Activated CD4-positive, alpha-beta T cell treated with anti-CD3 and anti-CD28 coated beads for 36 hours (primary cell): ENCODE measurements at regions of chr6 and their contacts with region 1.

Region 1: GRCh38 chr6:148760568-148761526 is 14.0 kb downstream of the UST start:
- DNase-seq: peak; percentile 71
- ATAC-seq: peak; percentile 67
- H3K4me3 Mint-ChIP-seq: peak overlapping the region; percentile 67
- H3K27ac Mint-ChIP-seq: peak overlapping the region; percentile 86
- H3K4me1 Mint-ChIP-seq: peaks cover 66% of the 10 kb centered on the region
- H3K27me3 Mint-ChIP-seq: peaks cover 15% of the 10 kb centered on the region

Region 2: GRCh38 chr6:148203970-148204369 is 556.9 kb before region 1 on chr6:
- CTCF ChIA-PET with region 1: no interaction called
- POLR2A ChIA-PET with region 1: no interaction called
- intact Hi-C with region 1: loop called in 1 of 2 experiments (anchors 5 kb)
- DNase-seq: peak; percentile 85
- ATAC-seq: peak; percentile 88
- H3K4me3 Mint-ChIP-seq: peak overlapping the region; percentile 66
- H3K27ac Mint-ChIP-seq: peak overlapping the region; percentile 59
- H3K4me1 Mint-ChIP-seq: peaks cover 38% of the 10 kb centered on the region
- H3K27me3 Mint-ChIP-seq: peaks cover 75% of the 10 kb centered on the region

Region 3: DNA sequence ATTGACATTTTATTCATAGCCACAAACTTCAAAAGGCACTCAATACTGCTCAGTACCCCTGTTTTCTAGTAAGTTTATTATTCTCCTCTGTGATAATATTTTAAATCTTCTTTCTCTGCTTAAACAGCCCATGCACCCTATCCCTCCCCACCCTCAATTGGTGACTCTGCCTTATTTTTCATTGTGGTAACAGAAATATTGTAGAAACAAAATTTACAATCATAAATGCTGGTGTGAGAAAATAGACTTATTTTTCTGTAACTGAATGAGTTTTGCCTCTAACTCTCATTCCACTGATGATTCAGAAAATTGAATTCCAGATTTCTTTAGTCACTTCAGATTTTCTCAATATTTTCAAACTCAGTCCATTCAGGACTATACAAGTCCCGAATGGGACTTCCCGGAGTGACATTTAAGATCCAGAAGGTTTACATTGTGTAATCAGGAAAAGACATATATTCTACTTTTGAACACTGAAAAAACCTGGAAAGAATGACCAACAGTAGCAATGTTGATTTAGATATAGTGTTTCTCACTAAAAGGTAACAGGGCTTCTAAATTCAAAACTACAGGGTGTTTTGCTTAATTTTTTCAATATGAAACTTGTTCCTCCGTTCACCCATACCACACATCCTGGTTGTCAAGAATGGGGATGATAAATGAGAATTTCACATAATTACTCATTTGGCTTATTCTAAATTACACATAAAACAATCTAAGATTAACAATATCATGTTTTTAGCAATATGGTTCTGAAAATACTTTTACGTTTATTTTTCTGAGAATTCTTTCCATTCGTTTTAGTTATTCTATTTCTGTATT is 48.8 kb before region 1 on chr6:
- CTCF ChIA-PET with region 1: no interaction called
- POLR2A ChIA-PET with region 1: no interaction called
- intact Hi-C with region 1: loop called in 1 of 2 experiments (anchors 1 kb)
- DNase-seq: no peak
- ATAC-seq: peak; percentile 78
- H3K4me3 Mint-ChIP-seq: no peak overlapping the region
- H3K27ac Mint-ChIP-seq: no peak overlapping the region
- H3K4me1 Mint-ChIP-seq: peaks cover 8% of the 10 kb centered on the region
- H3K27me3 Mint-ChIP-seq: peaks cover 2% of the 10 kb centered on the region

Region 4: DNA sequence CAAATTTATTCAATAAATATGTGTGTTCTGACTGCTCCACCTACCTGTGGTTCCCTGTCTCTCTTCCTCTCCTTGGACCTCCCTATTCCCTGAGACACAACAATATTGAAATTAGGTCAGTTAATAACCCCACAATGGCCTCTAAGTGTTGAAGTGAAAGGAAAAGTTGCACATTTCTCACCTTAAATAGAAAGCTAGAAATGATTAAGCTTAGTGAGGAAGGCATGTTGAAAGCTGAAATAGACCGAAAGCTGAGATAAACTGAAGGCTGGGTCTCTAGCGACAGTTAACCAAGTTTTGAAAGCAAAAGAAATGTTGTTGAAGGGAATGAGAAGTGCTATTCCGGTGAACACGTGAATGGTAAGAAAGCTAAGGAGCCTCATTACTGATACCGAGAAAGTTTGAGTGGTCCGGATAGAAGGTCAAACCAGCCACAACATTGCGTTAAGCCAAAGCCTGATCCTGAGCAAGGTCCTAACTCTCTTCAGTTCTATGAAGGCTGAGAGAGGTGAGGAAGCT is 20.1 kb after region 1 on chr6:
- CTCF ChIA-PET with region 1: interaction called, 9 read pairs
- POLR2A ChIA-PET with region 1: interaction called, 6 read pairs
- intact Hi-C with region 1: loop called (anchors 1 kb)
- DNase-seq: peak; percentile 16
- ATAC-seq: peak; percentile 94
- H3K4me3 Mint-ChIP-seq: peak overlapping the region; percentile 26
- H3K27ac Mint-ChIP-seq: peak overlapping the region; percentile 26
- H3K4me1 Mint-ChIP-seq: peaks cover 25% of the 10 kb centered on the region
- H3K27me3 Mint-ChIP-seq: peaks cover 3% of the 10 kb centered on the region

Region 5: DNA sequence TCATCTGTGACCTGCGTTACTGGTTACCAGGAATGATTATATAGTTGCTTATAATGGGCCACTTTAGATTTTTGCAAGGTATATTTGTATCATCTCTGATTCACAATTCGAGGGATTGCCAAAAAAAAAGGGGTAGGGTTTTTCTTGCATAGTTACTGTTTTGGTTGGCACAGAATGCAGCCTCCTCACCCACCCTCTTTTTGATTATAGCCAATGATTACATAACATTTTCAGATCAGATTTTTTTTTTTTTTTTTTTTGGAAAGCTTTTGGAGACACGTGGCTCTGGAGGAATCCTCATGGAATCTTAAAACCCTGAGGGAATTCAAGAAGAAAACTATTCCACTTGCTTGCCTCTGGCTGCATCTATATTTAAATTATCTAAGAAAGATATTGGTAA is 39.7 kb after region 1 on chr6:
- CTCF ChIA-PET with region 1: no interaction called
- POLR2A ChIA-PET with region 1: no interaction called
- intact Hi-C with region 1: no loop called
- DNase-seq: no peak
- ATAC-seq: no peak
- H3K4me3 Mint-ChIP-seq: no peak overlapping the region
- H3K27ac Mint-ChIP-seq: no peak overlapping the region
- H3K4me1 Mint-ChIP-seq: peaks cover 3% of the 10 kb centered on the region
- H3K27me3 Mint-ChIP-seq: peaks cover 6% of the 10 kb centered on the region

Region 6: DNA sequence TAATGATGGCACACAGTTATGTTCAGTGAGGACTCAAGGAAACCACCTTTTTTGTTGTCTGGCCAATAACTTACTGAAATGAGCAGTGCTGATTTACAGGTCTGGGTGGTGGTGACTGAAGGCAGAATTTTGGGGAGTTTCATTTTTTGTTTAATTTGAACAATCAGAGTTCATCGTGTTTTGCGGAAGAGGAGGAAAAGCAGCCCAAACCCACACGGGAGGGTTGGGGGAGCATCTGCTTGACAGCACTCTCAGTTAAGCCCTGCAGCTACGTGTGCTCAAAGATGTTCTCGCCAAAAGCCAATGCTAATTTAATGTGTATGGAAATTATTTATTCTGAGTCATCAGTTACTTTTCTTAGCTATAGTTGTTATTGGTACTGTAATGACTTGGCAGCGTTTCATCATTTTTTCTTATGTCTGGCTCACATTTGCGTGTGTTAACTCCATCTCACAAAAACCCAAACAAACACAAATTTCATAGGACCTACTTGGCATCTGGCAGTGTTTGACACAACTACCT is 75.1 kb after region 1 on chr6:
- CTCF ChIA-PET with region 1: no interaction called
- POLR2A ChIA-PET with region 1: interaction called, 4 read pairs
- intact Hi-C with region 1: loop called (anchors 1 kb)
- DNase-seq: peak; percentile 69
- ATAC-seq: peak; percentile 80
- H3K4me3 Mint-ChIP-seq: peak overlapping the region; percentile 65
- H3K27ac Mint-ChIP-seq: peak overlapping the region; percentile 92
- H3K4me1 Mint-ChIP-seq: peaks cover 36% of the 10 kb centered on the region
- H3K27me3 Mint-ChIP-seq: peaks cover 5% of the 10 kb centered on the region

Region 7: GRCh38 chr6:149140137-149140909 is 379.5 kb after region 1 on chr6:
- CTCF ChIA-PET with region 1: no interaction called
- POLR2A ChIA-PET with region 1: interaction called, 7 read pairs
- intact Hi-C with region 1: loop called in 1 of 2 experiments (anchors 5 kb)
- DNase-seq: peak; percentile 85
- ATAC-seq: peak; percentile 84
- H3K4me3 Mint-ChIP-seq: peak overlapping the region; percentile 63
- H3K27ac Mint-ChIP-seq: peak overlapping the region; percentile 97
- H3K4me1 Mint-ChIP-seq: peaks cover 42% of the 10 kb centered on the region
- H3K27me3 Mint-ChIP-seq: no peaks in the 10 kb centered on the region

Region 8: GRCh38 chr6:149342525-149342924 is 581.7 kb after region 1 on chr6:
- CTCF ChIA-PET with region 1: no interaction called
- POLR2A ChIA-PET with region 1: no interaction called
- intact Hi-C with region 1: loop called in 1 of 2 experiments (anchors 1 kb)
- DNase-seq: no peak
- ATAC-seq: peak; percentile 31
- H3K4me3 Mint-ChIP-seq: peak overlapping the region; percentile 36
- H3K27ac Mint-ChIP-seq: peak overlapping the region; percentile 70
- H3K4me1 Mint-ChIP-seq: peaks cover 81% of the 10 kb centered on the region
- H3K27me3 Mint-ChIP-seq: no peaks in the 10 kb centered on the region